ENCODE measurements at regions of chr19 and their contacts with region 1.

Region 1: GRCh38 chr19:12974301-12975220 is 5.2 kb downstream of the DAND5 start:
- DNase-seq: no peak
- ATAC-seq: no peak
- H3K4me3 ChIP-seq: no peak overlapping the region
- H3K27ac ChIP-seq: no peak overlapping the region
- H3K4me1 ChIP-seq: peaks cover 0 to 15% of the 10 kb centered on the region in 2 experiments; a peak in 2 of 4 replicates
- H3K27me3 ChIP-seq: no peaks in the 10 kb centered on the region
- CTCF ChIP-seq: no peak
- POLR2A ChIP-seq: no peak
- RAD21 ChIP-seq: no peak

Region 2: DNA sequence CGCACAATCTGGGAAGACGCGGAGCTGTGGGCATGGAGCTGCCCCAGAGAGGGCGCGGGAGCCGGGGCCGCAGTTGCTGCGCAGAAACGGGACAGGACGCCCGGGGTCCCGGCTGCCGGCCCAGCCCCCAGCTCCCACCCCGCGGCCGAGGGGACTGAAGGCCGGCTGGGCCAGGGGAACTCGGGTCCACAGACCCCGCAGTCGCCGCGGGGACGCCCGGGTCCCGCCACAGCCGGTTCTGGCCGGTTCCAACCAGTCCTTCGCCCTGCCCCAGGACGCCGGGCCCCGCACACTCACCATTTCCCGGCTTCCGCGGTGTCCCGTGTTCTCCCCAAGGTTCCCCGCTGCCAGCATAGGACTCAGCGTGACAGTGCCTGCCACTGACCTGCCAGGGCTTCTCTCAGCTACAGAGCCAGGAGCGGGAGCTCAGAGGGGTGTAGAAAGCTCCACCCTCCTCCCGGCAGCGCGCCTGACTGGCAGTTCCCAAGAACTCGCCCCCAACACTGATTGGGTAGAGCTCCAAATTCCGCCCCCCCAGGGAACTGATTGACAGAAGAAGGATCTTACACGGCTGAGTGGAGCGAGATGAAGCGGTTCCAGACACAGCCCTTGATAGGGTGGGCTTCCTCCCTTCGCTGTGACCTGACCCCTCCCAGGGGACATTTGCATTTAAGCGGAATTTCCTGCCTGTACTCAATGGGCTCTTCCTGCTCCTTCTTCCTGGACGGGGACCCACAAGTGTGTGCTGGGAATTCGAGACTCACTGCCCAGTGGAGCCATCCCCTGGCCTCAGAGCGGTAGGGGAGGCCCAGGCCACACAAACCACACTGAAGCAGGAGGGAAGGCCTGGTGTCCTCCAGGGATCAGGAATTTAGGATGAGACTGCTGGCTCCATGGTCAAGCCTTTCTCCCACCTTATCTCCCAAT is 609.1 kb before region 1 on chr19 and contains the start of gene ZNF442:
- CTCF ChIA-PET with region 1: no interaction called
- POLR2A ChIA-PET with region 1: no interaction called
- RAD21 ChIA-PET with region 1: no interaction called
- intact Hi-C with region 1: no loop called
- DNase-seq: no peak
- ATAC-seq: no peak
- H3K4me3 ChIP-seq: no peak within 1 kb of the TSS
- H3K27ac ChIP-seq: no peak within 1 kb of the TSS
- H3K4me1 ChIP-seq: no peaks in the 10 kb centered on the region
- H3K27me3 ChIP-seq: no peaks in the 10 kb centered on the region
- CTCF ChIP-seq: no peak
- POLR2A ChIP-seq: no peak
- RAD21 ChIP-seq: no peak
- total RNA-seq, gene ZNF442: not detected

Region 3: GRCh38 chr19:13060964-13061927 is 86.7 kb after region 1 on chr19:
- CTCF ChIA-PET with region 1: interaction called, 59 read pairs
- POLR2A ChIA-PET with region 1: interaction called, 8 read pairs
- RAD21 ChIA-PET with region 1: interaction called, 11 to 20 read pairs
- intact Hi-C with region 1: no loop called
- DNase-seq: peak; percentile 59
- ATAC-seq: peak; percentile 86
- H3K4me3 ChIP-seq: peak overlapping the region; percentile 51 to 66
- H3K27ac ChIP-seq: peak overlapping the region; percentile 78
- H3K4me1 ChIP-seq: peaks cover 41 to 56% of the 10 kb centered on the region in 2 experiments
- H3K27me3 ChIP-seq: no peaks in the 10 kb centered on the region
- CTCF ChIP-seq: peak; percentile 87 to 97 (median 92)
- POLR2A ChIP-seq: no peak
- RAD21 ChIP-seq: peak; percentile 99

Region 4: DNA sequence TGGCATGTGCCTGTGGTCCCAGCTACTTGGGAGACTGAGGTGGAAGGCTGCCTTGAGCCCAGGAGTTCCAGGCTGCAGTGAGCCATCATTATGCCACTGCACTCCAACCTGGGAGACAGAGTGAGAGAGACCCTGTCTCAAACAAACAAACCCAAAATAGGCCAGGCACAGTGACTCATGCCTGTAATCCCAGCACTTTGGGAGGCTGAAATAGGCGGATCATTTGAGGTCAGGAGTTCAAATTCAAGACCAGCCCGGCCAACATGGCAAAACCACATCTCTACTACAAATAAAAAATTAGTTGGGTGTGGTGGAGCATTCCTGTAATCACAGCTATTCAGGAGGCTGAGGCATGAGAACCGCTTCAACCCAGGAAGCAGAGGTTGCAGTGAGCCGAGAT is 168.6 kb after region 1 on chr19:
- CTCF ChIA-PET with region 1: no interaction called
- POLR2A ChIA-PET with region 1: no interaction called
- RAD21 ChIA-PET with region 1: no interaction called
- intact Hi-C with region 1: no loop called
- DNase-seq: no peak
- ATAC-seq: peak; percentile 73
- H3K4me3 ChIP-seq: peak overlapping the region in 1 of 2 experiments; percentile 38; a peak in 2 of 4 replicates
- H3K27ac ChIP-seq: peak overlapping the region; percentile 91
- H3K4me1 ChIP-seq: peaks cover 61 to 84% of the 10 kb centered on the region in 2 experiments
- H3K27me3 ChIP-seq: no peaks in the 10 kb centered on the region
- CTCF ChIP-seq: no peak
- POLR2A ChIP-seq: no peak
- RAD21 ChIP-seq: no peak

Region 5: DNA sequence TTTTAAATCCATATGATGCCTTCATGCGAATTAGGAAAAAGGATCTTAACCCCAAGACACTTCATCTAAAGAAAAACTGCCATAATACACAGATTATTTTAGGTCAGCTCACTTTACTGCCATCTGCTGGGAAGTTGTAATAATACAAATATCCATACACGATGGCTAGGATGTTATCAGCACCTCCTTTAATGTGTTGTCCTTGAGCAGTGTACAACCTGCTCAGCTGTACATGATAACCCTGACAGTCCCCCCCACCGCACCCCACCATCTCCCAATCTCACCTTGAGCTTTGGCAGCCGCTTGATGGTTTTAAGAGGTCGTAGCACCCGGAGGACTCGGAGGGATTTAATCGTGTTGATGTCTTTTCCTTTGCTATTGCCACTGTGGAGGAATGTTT is 287.9 kb after region 1 on chr19:
- CTCF ChIA-PET with region 1: interaction called, 14 read pairs
- POLR2A ChIA-PET with region 1: interaction called, 5 read pairs
- RAD21 ChIA-PET with region 1: interaction called in 1 of 2 experiments, 3 read pairs
- intact Hi-C with region 1: loop called (anchors 1 kb)
- DNase-seq: no peak
- ATAC-seq: peak; percentile 55
- H3K4me3 ChIP-seq: no peak overlapping the region
- H3K27ac ChIP-seq: no peak overlapping the region
- H3K4me1 ChIP-seq: peaks cover 24 to 35% of the 10 kb centered on the region in 2 experiments
- H3K27me3 ChIP-seq: no peaks in the 10 kb centered on the region
- CTCF ChIP-seq: peak; percentile 27 to 76 (median 64); a peak in 5 of 6 replicates
- POLR2A ChIP-seq: no peak
- RAD21 ChIP-seq: peak; percentile 79

Region 6: DNA sequence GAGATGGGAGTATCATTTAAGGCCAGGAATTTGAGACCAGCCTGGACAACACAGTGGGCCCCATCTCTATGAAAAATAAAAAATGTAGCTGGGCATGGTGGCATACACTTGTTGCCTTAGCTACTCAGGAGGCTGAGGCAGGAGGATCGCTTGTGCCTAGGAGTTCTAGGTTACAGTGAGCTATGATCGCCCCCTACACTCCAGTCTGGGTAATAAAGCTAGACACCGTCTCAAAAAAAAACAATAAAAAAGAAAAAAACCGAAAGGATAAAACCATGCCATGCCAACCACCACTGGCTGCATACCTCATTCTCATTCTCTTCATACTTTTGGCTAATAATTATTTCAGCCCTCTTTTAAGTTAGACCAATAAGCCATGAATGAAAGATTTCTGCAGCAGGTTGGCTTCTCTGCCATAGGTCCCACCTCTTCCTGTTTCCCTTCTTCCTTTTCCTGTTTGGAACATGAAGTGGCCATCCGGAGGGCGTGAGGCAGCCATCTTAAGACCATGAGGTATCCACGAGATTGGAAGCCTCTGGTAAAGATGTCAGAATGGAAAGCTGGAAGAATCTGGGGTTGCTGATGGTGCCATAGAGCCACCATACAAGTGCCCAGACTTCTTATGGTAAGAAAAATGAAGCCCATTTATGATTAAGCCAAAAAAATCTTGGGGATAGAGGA is 360.4 kb after region 1 on chr19:
- CTCF ChIA-PET with region 1: no interaction called
- POLR2A ChIA-PET with region 1: no interaction called
- RAD21 ChIA-PET with region 1: interaction called in 1 of 2 experiments, 4 read pairs
- intact Hi-C with region 1: loop called (anchors 5 kb)
- DNase-seq: peak; percentile 90
- ATAC-seq: peak; percentile 91
- H3K4me3 ChIP-seq: peak overlapping the region; percentile 70 to 84
- H3K27ac ChIP-seq: peak overlapping the region; percentile 64
- H3K4me1 ChIP-seq: peaks cover 2 to 15% of the 10 kb centered on the region in 2 experiments; a peak in 2 of 4 replicates
- H3K27me3 ChIP-seq: no peaks in the 10 kb centered on the region
- CTCF ChIP-seq: peak; percentile 67 to 85 (median 78)
- POLR2A ChIP-seq: peak; percentile 40
- RAD21 ChIP-seq: peak; percentile 82

Region 7: GRCh38 chr19:13588957-13589833 is 614.6 kb after region 1 on chr19:
- CTCF ChIA-PET with region 1: interaction called, 11 read pairs
- POLR2A ChIA-PET with region 1: no interaction called
- RAD21 ChIA-PET with region 1: no interaction called
- intact Hi-C with region 1: loop called (anchors 10 kb)
- DNase-seq: peak; percentile 49
- ATAC-seq: peak; percentile 100
- H3K4me3 ChIP-seq: peak overlapping the region; percentile 26 to 41
- H3K27ac ChIP-seq: no peak overlapping the region
- H3K4me1 ChIP-seq: peaks cover 0 to 10% of the 10 kb centered on the region in 2 experiments; a peak in 2 of 4 replicates
- H3K27me3 ChIP-seq: no peaks in the 10 kb centered on the region
- CTCF ChIP-seq: peak; percentile 93 to 98 (median 98)
- POLR2A ChIP-seq: no peak
- RAD21 ChIP-seq: peak; percentile 89

Measured in HCT116 (cell line).